ENCODE measurements at regions of chr20 and their contacts with region 1.

Region 1: GRCh38 chr20:20017001-20017843 is at the start of gene NAA20:
- DNase-seq: peak; percentile 86
- H3K4me3 ChIP-seq: peak within 1 kb of the TSS; percentile 87 to 100 (median 97)
- H3K27ac ChIP-seq: peak within 1 kb of the TSS; percentile 82
- H3K4me1 ChIP-seq: peaks cover 21% of the 10 kb centered on the region
- H3K27me3 ChIP-seq: no peaks in the 10 kb centered on the region
- CTCF ChIP-seq: peak; percentile 48 to 77
- total RNA-seq, gene NAA20: 44.3 to 105 TPM

Region 2: GRCh38 chr20:20003031-20003954 is 13.9 kb before region 1 on chr20:
- CTCF ChIA-PET with region 1: no interaction called
- dilution Hi-C with region 1: no loop called
- in situ Hi-C with region 1: no loop called
- intact Hi-C with region 1: loop called (anchors 1 kb)
- DNase-seq: peak; percentile 56
- H3K4me3 ChIP-seq: no peak overlapping the region
- H3K27ac ChIP-seq: peak overlapping the region; percentile 17
- H3K4me1 ChIP-seq: peaks cover 12% of the 10 kb centered on the region
- H3K27me3 ChIP-seq: no peaks in the 10 kb centered on the region
- CTCF ChIP-seq: no peak

Region 3: GRCh38 chr20:20052074-20052970 is 35.1 kb after region 1 on chr20 and contains the starts of genes CFAP61 and CRNKL1:
- CTCF ChIA-PET with region 1: no interaction called
- dilution Hi-C with region 1: loop called (anchors 5 kb)
- in situ Hi-C with region 1: no loop called
- intact Hi-C with region 1: no loop called
- DNase-seq: peak; percentile 96
- H3K4me3 ChIP-seq: peak within 1 kb of the TSS; percentile 78 to 92 (median 80)
- H3K27ac ChIP-seq: peak within 1 kb of the TSS; percentile 86
- H3K4me1 ChIP-seq: peaks cover 5% of the 10 kb centered on the region
- H3K27me3 ChIP-seq: no peaks in the 10 kb centered on the region
- CTCF ChIP-seq: peak in 1 of 2 donors; percentile 18
- total RNA-seq, gene CFAP61: 0.67 TPM in 1 of 2 donors, not detected in the other
- total RNA-seq, gene CRNKL1: 15.7 to 16.7 TPM

Measured in mammary epithelial cell (primary cell).